ENCODE measurements at regions of chr2 and their contacts with region 1.

Region 1: DNA sequence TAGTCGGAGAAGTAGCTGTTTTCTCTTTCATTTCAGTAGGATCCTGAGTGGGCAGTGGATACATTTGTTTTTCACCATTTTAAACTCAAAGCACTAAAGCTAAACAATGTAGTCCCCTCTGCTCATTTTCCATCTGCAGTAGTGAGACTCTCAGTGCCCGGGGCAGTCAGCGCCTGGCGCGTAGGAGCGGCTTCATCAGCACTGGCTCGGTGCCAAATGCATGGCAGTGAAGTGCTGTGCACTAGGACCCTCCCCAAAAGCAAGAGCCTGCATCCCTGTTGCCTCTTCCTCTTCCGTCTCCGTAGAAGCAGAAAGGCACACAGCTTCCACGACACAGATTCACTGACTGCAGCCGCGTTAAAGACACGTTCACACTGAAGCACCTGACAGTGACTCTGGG is 19.0 kb upstream of the ESPNL start:
- DNase-seq: no peak
- H3K4me3 ChIP-seq: no peak overlapping the region
- H3K27ac ChIP-seq: no peak overlapping the region
- H3K4me1 ChIP-seq: no peaks in the 10 kb centered on the region
- H3K27me3 ChIP-seq: no peaks in the 10 kb centered on the region
- CTCF ChIP-seq: no peak

Region 2: GRCh38 chr2:237968121-237968862 is 112.9 kb before region 1 on chr2:
- intact Hi-C with region 1: no loop called
- DNase-seq: peak; percentile 58 to 75
- H3K4me3 ChIP-seq: peak overlapping the region; percentile 65 to 82
- H3K27ac ChIP-seq: peak overlapping the region; percentile 68 to 72
- H3K4me1 ChIP-seq: peaks cover 0 to 42% (median 26%) of the 10 kb centered on the region in 4 donors
- H3K27me3 ChIP-seq: no peaks in the 10 kb centered on the region
- CTCF ChIP-seq: no peak

Region 3: DNA sequence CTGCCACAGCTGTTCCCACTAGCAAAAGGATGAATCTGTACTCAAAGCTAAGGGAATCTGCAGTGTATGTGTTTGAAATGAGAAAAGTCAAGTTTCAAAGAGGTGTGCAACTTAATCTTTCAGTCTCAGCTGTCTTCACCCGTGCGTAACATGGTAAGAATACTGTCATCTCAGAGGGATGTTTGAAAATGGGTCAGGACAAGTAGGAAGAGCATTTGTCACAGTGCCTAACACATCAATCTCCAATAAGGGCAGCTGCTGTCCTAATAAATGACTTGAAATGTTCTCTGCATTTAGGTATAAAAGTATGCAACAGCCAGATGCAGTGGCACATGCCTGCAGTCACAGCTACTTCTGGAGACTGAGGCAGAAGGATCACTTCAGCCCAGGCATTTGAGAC is 109.3 kb after region 1 on chr2:
- intact Hi-C with region 1: loop called (anchors 10 kb)
- DNase-seq: no peak
- H3K4me3 ChIP-seq: no peak overlapping the region
- H3K27ac ChIP-seq: no peak overlapping the region
- H3K4me1 ChIP-seq: peaks cover 0 to 2% (median 0%) of the 10 kb centered on the region in 4 donors
- H3K27me3 ChIP-seq: no peaks in the 10 kb centered on the region
- CTCF ChIP-seq: no peak

Measured in tibial artery (tissue), 4 donors.